ENCODE measurements at regions of chr17 and their contacts with region 1.

Region 1: DNA sequence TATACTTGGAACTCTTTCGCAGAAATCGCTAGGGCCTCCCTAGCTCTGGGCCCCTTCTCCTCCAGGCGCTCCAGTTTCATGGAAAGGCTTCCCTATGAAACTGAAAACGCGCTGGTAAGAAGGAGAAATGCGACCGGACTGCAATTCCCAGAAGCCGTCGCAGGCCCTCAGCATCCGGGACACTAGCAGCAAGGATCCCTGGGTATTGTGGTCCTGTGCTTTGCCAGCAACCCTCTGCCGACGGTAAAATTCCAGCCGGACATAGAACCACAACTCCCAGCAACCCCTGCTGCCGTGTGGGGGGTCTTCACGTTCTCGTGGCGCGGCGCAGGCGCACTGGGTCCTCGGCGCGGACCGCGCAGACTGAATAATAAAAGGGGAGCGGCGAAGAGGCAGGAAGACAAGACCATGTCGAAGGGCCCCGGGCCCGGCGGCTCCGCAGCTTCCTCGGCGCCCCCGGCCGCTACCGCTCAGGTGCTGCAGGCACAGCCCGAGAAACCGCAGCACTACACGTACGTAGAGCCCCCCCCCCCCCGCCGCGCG is at the start of gene UNK:
- DNase-seq: peak; percentile 96
- H3K4me3 Mint-ChIP-seq: peak within 1 kb of the TSS; percentile 90
- H3K27ac Mint-ChIP-seq: peak within 1 kb of the TSS; percentile 100
- H3K4me1 Mint-ChIP-seq: peaks cover 52% of the 10 kb centered on the region
- H3K27me3 Mint-ChIP-seq: no peaks in the 10 kb centered on the region
- total RNA-seq, gene UNK: 26.1 TPM

Region 2: DNA sequence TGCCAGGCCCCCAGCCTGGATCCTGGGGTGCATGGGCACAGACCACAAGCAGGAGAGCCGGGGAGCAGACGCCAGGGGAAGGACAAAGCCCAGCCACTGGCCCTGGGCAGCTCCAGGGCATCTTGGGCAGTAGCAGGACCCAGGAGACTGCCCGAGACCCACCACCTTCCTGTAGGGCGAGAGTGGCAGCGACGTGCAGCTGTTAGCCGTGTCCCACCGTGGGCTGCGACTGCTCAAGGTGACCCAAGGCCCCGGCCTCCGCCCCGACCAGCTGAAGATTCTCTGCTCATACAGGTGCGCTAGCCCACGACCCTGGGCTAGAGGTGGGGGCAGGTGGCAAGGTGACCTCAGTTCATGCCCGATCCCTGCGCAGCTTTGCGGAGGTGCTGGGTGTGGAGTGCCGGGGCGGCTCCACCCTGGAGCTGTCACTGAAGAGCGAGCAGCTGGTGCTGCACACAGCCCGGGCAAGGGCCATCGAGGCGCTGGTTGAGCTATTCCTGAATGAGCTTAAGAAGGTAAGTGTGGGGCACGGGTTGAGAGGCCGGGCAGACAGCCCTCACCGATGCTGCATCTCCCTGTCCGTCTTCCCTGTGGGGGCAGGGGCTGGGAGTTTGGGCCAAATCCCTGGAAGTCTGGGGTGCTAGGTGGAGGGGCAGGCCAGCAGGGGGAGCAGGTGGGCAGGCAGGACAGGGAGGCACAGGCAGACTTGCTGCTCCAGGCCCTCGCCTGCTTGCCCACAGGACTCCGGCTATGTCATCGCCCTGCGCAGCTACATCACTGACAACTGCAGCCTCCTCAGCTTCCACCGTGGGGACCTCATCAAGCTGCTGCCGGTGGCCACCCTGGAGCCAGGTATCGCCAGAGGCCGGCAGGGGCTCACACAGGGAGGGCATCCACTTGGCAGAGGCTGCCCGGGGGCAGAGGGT is 164.8 kb before region 1 on chr17:
- CTCF ChIA-PET with region 1: no interaction called
- POLR2A ChIA-PET with region 1: no interaction called
- DNase-seq: peak; percentile 29
- H3K4me3 Mint-ChIP-seq: no peak overlapping the region
- H3K27ac Mint-ChIP-seq: no peak overlapping the region
- H3K4me1 Mint-ChIP-seq: no peaks in the 10 kb centered on the region
- H3K27me3 Mint-ChIP-seq: no peaks in the 10 kb centered on the region

Region 3: DNA sequence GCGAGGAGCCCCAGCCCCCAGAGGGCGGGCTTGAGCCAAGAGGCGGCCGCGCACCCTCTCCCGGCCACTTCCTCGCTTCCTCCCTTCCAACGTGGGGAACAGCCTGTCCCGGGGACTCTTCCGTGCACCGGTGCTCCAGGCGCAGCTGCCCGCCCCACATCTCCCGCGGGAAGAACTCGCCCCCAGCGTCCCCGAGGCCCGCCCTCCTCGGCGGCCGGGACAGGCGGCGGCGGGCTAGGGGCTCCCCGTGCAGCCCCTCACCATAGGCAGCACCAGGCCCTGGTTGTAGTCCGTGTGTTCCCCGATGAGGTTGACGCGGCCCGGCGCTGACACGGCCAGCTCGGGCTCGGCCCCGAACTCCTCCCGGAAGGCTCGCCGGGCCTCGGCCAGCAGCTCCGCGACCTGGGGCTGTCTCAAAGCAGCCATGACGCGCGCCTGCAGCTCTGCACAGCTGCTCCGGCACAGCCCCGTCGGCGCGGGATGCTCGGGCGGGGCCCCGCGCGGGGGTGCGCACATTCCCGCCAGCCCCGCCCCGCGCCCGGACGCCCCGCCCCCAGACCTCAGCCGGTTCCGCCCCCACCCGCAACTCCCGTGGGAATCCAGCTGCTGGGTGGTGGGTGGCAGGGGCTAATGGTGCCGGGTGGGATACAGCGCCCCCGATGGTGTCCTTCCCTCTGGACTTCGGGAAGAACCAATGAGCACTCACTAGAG is 19.7 kb before region 1 on chr17 and contains the start of gene GALK1:
- CTCF ChIA-PET with region 1: interaction called, 21 read pairs
- POLR2A ChIA-PET with region 1: interaction called, 214 read pairs
- DNase-seq: peak; percentile 82
- H3K4me3 Mint-ChIP-seq: peak within 1 kb of the TSS; percentile 77
- H3K27ac Mint-ChIP-seq: peak within 1 kb of the TSS; percentile 49
- H3K4me1 Mint-ChIP-seq: peaks cover 19% of the 10 kb centered on the region
- H3K27me3 Mint-ChIP-seq: peaks cover 4% of the 10 kb centered on the region
- total RNA-seq, gene GALK1: 40.0 to 40.6 TPM

Region 4: DNA sequence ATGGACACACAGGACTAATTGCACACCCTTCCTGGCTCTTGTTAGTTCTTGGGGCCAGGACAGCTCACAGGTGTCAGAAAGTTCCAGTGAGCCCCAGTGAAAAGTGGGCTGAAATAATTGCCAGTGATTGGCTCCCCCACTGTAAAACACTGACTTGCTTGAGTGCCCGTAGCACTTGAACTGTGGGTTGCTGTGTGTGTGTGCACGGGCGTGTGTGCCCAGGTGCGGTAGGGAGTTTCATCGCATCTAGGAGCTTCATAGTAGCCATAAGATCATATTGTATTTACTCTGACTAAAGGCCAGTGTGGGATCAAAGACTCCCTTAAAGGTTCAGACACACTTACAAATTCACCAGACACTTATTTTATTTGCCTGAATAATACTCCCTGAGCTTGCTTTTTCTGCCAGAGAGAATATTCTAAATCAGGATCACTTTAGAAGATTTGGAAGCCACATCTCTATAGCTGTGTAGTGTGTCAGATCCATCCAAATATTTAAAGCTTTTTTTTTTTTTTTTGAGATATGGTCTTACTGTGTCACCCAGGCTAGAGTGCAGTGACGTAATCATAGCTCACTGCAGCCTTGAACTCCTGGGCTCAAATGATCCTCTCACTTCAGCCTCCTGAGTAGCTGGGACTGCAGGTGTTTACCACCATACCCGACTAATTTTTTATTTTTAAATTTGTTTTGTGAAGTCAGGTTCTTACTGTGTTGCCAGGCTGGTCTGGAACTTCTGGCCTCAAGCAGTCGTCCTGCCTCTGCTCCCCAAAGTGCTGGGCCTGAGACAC is 11.5 kb after region 1 on chr17:
- CTCF ChIA-PET with region 1: interaction called, 8 read pairs
- POLR2A ChIA-PET with region 1: interaction called, 43 read pairs
- DNase-seq: no peak
- H3K4me3 Mint-ChIP-seq: no peak overlapping the region
- H3K27ac Mint-ChIP-seq: no peak overlapping the region
- H3K4me1 Mint-ChIP-seq: peaks cover 28% of the 10 kb centered on the region
- H3K27me3 Mint-ChIP-seq: no peaks in the 10 kb centered on the region

Region 5: DNA sequence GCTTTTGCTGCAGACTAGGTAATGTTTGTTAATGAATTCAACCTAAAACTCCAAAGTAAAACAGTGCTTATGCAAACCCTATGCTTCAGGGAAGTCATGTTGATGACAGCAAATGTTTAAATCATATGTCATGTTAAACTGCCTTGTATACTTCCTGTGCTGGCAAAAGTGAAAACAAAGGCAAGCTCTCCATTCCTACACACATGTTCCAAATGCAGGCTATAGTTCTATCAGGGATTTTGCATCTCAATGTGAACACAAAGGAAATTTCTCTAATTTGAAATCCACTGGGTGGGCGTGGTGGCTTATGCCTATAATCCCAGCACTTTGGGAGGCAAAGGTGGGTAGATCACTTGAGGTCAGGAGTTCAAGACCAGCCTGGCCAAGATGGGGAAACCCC is 19.3 kb after region 1 on chr17:
- CTCF ChIA-PET with region 1: interaction called, 3 read pairs
- POLR2A ChIA-PET with region 1: interaction called, 26 read pairs
- DNase-seq: no peak
- H3K4me3 Mint-ChIP-seq: no peak overlapping the region
- H3K27ac Mint-ChIP-seq: peak overlapping the region; percentile 24
- H3K4me1 Mint-ChIP-seq: peaks cover 12% of the 10 kb centered on the region
- H3K27me3 Mint-ChIP-seq: no peaks in the 10 kb centered on the region

Region 6: DNA sequence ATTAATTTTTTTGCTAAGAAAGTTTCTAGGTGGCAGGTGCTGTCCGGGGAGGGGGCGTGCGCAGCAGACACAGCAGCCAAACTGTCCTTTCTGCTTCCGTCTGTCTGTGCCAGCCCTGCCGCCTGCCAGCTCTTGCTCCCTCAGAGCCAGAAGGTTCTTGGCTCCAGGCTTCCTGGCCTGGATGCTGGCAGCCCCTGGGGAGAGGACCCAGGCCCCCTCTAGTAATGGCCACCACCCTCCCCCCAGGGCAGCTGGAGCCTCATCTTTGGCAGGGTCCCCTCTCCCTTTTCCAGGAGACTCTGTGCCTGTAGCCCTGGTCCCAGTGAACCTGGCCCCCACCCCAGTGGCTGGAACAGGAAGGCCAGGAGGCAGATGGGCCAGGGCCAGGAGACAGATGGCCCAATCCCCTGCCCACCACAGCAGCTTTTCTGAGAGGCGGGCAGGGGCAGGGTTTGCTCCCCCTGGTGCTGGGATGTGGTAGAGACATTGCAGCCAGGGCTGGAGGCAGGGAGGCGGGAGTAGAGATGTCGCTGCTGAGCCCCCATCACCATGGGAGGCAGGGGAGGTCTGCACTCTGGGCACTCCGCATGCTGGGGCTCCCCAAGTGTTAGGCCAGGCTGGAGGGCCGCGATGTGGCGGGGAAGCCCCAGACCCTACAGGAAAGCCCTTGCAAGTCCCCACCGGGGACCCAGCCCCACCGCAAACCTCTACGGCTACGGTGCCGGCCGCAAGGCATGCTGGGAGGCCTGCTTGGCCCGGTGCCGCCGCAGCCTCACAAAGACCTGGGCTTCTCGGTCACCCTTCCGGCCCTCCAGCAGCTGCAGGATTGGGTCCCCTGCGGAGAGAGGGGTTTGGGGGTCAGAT is 42.9 kb after region 1 on chr17:
- CTCF ChIA-PET with region 1: interaction called, 14 read pairs
- POLR2A ChIA-PET with region 1: interaction called, 190 read pairs
- DNase-seq: peak; percentile 70
- H3K4me3 Mint-ChIP-seq: peak overlapping the region; percentile 35
- H3K27ac Mint-ChIP-seq: peak overlapping the region; percentile 93
- H3K4me1 Mint-ChIP-seq: peaks cover 26% of the 10 kb centered on the region
- H3K27me3 Mint-ChIP-seq: no peaks in the 10 kb centered on the region

Region 7: DNA sequence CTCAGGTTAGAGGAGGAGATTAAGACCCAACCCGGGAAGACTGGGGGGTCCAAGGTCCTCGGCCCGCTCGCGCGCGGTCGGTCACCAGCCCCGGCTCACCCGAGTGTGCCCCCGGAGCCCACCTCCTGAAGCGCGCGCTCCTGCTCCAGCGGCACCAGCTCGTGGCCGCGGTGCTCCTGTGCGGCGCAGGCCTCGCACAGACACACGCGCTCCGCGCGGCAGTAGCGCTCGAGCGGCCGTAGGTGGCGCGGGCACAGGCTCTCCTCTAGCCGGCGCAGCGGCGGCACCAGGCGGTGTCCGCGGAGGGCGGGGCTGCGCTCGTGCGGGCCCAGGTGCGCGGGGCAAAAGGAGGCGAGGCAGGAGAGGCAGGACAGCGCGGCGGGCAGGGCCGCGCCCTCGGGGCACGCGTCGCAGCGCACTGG is 93.2 kb after region 1 on chr17:
- CTCF ChIA-PET with region 1: interaction called, 5 read pairs
- POLR2A ChIA-PET with region 1: interaction called, 27 read pairs
- DNase-seq: peak; percentile 82
- H3K4me3 Mint-ChIP-seq: peak overlapping the region; percentile 89
- H3K27ac Mint-ChIP-seq: peak overlapping the region; percentile 93
- H3K4me1 Mint-ChIP-seq: peaks cover 63% of the 10 kb centered on the region
- H3K27me3 Mint-ChIP-seq: peaks cover 14% of the 10 kb centered on the region

Region 8: DNA sequence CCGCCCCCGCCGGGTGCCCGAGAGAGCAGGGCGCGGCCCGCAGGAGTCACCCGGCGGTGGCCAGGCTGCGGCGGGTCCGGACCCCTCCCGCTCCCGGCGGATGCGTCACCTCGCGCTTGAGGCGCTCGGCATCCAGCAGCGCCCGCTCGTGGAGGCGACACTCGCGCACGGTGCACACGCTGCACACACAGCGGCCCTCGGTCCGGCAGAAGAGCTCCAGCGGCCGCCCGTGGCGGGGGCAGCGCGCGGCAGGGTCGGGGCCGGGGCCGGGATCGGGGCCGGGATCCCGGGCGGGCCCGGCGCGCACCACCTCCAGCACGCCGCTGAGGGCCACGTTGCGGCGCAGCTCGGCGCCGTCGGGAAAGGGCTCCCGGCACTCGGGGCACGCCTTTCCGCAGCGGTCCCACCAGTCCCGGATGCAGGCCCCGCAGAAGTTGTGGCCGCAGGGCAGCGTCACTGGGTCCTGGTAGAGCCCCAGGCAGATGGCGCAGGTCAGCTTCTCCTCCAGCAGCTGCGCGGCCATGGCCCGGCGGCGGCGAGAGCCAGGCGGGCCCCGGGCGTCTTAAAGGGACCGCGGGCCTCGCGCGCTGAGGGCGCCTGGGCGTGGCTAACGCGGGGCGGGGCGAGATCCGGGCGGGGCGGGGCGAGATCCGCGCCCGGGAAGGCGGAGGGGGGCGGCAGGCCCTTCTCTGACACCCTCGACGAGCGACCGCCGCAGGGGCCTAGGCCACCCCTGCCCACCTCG is 112.0 kb after region 1 on chr17 and contains the start of gene TRIM65:
- CTCF ChIA-PET with region 1: interaction called, 8 read pairs
- POLR2A ChIA-PET with region 1: interaction called, 28 read pairs
- DNase-seq: peak; percentile 83
- H3K4me3 Mint-ChIP-seq: peak within 1 kb of the TSS; percentile 81
- H3K27ac Mint-ChIP-seq: peak within 1 kb of the TSS; percentile 74
- H3K4me1 Mint-ChIP-seq: peaks cover 24% of the 10 kb centered on the region
- H3K27me3 Mint-ChIP-seq: no peaks in the 10 kb centered on the region
- total RNA-seq, gene TRIM65: 24.9 to 26.1 TPM

Measured in activated CD4-positive, alpha-beta memory T cell treated with anti-CD3 and anti-CD28 coated beads, Interleukin-2, amount 10 ng/mL, durations not matched to agents 7 days and 5 days (primary cell).